HEK293T (cell line): ENCODE measurements at regions of chr17 and their contacts with region 1.

Region 1: GRCh38 chr17:6913608-6914443 is 82.0 kb upstream of the ALOX12 start:
- DNase-seq: peak; percentile 82

Region 2: GRCh38 chr17:6812295-6812694 is 101.5 kb before region 1 on chr17:
- CTCF ChIA-PET with region 1: no interaction called
- POLR2A ChIA-PET with region 1: no interaction called
- DNase-seq: no peak

Region 3: GRCh38 chr17:6872137-6872808 is 41.6 kb before region 1 on chr17:
- CTCF ChIA-PET with region 1: no interaction called
- POLR2A ChIA-PET with region 1: no interaction called
- DNase-seq: no peak

Region 4: DNA sequence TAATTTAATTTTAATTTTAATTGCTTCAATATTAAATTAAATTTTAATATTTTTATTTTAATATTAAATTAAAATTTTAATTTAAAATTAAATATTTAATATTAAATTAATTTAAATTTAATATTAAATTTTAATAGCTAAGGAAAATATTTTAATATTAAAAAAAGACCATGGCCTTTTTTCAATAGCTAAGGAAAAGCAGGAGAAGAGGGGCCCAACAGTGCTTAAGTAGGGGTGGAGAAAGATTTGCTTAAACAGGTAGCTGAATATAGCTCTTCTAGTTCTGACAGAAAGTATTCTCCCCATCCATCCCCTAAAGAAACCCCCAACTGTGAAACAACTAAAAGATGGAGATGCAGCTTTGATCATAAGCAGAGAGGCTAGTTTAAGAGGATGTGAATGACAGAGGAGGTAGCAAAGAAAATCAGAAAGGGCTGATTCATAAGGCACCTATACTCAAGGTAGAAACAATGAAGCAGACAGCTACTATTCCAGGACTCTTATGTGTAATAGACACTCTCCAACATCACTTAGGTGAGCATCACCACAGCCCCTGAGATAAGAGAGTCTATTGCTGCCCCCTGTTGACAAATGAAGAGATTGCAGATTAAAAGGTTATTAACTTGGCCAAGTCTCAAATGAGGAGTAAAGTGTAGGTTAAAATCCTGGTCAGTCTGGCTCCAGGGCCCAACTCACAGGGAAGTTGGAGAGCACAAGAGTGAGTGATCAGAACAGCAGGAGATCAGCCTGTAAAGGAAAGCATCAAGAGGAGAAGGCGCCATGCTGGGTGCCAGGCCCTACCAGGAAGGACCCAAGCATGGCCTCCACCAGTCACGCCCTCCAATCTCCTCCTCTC is 90.8 kb after region 1 on chr17:
- CTCF ChIA-PET with region 1: interaction called, 36 read pairs
- POLR2A ChIA-PET with region 1: interaction called, 7 read pairs
- DNase-seq: peak; percentile 67

Region 5: DNA sequence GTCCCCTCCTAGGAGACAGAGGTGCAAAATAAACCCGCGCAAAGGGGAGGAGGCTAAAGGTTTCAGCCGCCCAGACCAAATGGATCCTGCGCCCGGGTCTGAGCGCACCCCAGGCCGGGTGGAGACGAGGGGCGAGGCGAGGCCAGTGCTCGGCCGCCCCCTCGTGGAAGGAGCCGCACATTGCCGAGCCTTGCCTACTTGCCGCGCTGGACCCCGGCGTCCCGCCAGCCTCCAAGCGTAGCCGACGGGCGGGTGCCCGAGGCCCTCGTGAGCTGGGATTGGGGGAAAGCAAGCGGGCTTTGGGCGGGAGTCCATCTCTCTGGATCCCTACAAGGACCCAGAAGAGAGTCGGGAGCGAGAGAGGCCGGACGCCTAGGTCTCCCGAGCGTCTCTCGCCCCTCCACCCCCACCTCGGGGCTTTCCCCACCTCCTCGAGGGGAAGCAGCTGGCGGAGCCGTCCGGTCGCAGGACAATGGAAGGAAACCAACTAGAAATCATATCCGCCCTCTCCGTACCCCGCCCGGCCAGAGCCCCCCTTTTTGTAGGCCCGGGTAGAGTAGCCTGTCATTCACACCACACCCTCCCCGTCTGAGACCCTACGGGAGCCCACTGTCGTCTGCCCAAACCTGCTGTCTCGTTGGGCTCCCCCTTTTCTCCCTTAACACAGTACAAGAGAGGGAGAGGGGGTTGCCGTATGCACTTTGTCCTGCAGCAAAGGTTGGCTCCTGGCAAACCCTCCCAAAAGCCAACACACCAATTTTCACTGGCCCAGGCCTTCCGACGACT is 108.4 kb after region 1 on chr17:
- CTCF ChIA-PET with region 1: interaction called, 10 read pairs
- POLR2A ChIA-PET with region 1: interaction called, 6 read pairs
- DNase-seq: peak; percentile 78